ENCODE measurements at regions of chr5 and their contacts with region 1.

Region 1: GRCh38 chr5:157172403-157172802 is 6.3 kb upstream of the GARIN3 start:
- DNase-seq: peak; percentile 98
- ATAC-seq: peak; percentile 98
- H3K4me3 ChIP-seq: no peak overlapping the region
- H3K27ac ChIP-seq: peak overlapping the region; percentile 93
- H3K4me1 ChIP-seq: peaks cover 14% of the 10 kb centered on the region
- H3K27me3 ChIP-seq: no peaks in the 10 kb centered on the region
- CTCF ChIP-seq: no peak
- EP300 ChIP-seq: peak; percentile 88 to 94; a peak in 3 of 4 replicates
- POLR2A ChIP-seq: no peak
- RAD21 ChIP-seq: 0 out of 2 replicates have a peak, but pooled peaks have one; percentile 30

Region 2: DNA sequence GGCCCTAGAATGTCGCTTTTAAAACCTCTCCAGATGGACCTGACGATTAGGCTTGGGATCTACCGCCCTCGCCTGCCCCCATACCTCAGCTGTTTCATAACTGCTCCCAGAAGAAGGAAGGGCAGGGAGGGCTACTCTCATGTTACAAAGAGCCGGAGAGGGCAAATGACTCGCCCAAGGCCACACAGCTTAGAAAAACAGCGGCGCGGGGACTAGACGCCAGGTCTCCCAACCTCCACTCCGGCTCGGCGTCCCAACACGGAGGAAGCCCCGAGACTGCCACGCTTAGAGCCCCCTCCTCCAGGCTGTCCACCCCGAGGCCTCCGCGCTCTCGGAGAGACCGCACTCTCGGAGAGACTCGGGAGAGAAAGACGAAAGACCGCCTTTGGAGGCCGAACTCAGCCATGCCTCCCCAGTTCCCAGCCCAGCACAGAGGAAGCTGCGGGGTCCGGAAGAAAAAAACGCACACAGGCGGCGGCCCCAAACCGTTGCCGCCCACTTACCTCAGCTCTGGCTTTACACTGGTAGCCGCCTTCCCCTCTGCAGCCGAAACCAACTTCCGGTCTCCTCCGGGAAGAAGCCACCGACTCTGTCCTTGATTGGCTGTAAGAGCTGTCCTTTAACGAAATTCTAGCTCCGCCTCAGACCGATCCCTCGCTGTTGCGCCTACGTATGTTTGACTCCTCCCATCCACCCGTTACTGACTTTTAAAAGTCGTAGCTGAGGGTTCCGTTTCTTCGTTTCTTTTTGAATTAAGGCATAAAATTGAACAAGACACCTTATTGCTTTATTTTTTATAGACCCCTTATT is 29.9 kb before region 1 on chr5 and contains the start of gene MED7:
- CTCF ChIA-PET with region 1: interaction called, 27 read pairs
- POLR2A ChIA-PET with region 1: interaction called, 13 read pairs
- RAD21 ChIA-PET with region 1: interaction called, 30 read pairs
- SMC1A ChIA-PET with region 1: interaction called, 26 read pairs
- in situ Hi-C with region 1: no loop called
- intact Hi-C with region 1: no loop called
- DNase-seq: peak; percentile 99
- ATAC-seq: peak; percentile 100
- H3K4me3 ChIP-seq: peak within 1 kb of the TSS; percentile 88
- H3K27ac ChIP-seq: peak within 1 kb of the TSS; percentile 99
- H3K4me1 ChIP-seq: peaks cover 7% of the 10 kb centered on the region
- H3K27me3 ChIP-seq: no peaks in the 10 kb centered on the region
- CTCF ChIP-seq: no peak
- EP300 ChIP-seq: no peak
- POLR2A ChIP-seq: peak; percentile 96
- RAD21 ChIP-seq: no peak
- polyA plus RNA-seq, gene MED7: 42.6 to 47.7 TPM

Region 3: DNA sequence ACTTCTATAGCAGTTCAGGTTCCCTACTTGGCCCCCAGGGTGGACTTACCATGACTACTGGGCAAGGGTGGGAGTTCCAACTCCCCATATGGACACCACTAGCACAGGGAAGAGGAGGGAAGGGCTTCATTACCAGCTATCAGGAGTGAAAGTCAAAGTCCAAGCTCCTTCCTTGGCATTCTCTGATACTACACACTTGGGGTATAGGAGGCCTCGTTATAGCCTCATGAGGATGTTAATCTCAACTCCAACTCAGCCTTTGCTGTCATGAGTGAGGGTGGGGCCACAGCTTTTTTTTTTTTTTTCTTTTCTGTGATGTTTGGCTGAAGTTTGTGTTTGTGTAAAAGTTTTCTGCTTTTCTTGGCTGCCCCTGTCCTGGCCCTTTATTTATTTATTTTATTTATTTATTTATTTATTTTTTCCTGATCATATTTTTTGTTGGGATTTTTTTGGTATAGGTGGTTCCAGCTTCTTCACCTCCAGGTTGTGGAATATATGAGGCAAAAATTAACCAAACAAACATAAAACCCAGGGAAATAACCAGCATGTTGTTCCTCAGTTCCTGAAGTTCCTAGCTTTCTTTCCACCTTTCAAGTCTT is 15.0 kb before region 1 on chr5:
- CTCF ChIA-PET with region 1: interaction called, 5 read pairs
- POLR2A ChIA-PET with region 1: interaction called, 17 read pairs
- RAD21 ChIA-PET with region 1: interaction called, 28 read pairs
- SMC1A ChIA-PET with region 1: interaction called, 35 read pairs
- in situ Hi-C with region 1: no loop called
- intact Hi-C with region 1: no loop called
- DNase-seq: no peak
- ATAC-seq: no peak
- H3K4me3 ChIP-seq: no peak overlapping the region
- H3K27ac ChIP-seq: no peak overlapping the region
- H3K4me1 ChIP-seq: no peaks in the 10 kb centered on the region
- H3K27me3 ChIP-seq: no peaks in the 10 kb centered on the region
- CTCF ChIP-seq: no peak
- EP300 ChIP-seq: no peak
- POLR2A ChIP-seq: no peak
- RAD21 ChIP-seq: no peak

Region 4: GRCh38 chr5:157189223-157189622 is 16.8 kb after region 1 on chr5:
- CTCF ChIA-PET with region 1: interaction called, 5 read pairs
- POLR2A ChIA-PET with region 1: interaction called, 3 read pairs
- RAD21 ChIA-PET with region 1: interaction called, 7 read pairs
- SMC1A ChIA-PET with region 1: interaction called, 43 read pairs
- in situ Hi-C with region 1: no loop called
- intact Hi-C with region 1: no loop called
- DNase-seq: no peak
- ATAC-seq: peak; percentile 98
- H3K4me3 ChIP-seq: no peak overlapping the region
- H3K27ac ChIP-seq: no peak overlapping the region
- H3K4me1 ChIP-seq: 0 out of 2 replicates have a peak, but pooled peaks cover 6% of the 10 kb centered on the region
- H3K27me3 ChIP-seq: no peaks in the 10 kb centered on the region
- CTCF ChIP-seq: no peak
- EP300 ChIP-seq: no peak
- POLR2A ChIP-seq: no peak
- RAD21 ChIP-seq: no peak

Region 5: DNA sequence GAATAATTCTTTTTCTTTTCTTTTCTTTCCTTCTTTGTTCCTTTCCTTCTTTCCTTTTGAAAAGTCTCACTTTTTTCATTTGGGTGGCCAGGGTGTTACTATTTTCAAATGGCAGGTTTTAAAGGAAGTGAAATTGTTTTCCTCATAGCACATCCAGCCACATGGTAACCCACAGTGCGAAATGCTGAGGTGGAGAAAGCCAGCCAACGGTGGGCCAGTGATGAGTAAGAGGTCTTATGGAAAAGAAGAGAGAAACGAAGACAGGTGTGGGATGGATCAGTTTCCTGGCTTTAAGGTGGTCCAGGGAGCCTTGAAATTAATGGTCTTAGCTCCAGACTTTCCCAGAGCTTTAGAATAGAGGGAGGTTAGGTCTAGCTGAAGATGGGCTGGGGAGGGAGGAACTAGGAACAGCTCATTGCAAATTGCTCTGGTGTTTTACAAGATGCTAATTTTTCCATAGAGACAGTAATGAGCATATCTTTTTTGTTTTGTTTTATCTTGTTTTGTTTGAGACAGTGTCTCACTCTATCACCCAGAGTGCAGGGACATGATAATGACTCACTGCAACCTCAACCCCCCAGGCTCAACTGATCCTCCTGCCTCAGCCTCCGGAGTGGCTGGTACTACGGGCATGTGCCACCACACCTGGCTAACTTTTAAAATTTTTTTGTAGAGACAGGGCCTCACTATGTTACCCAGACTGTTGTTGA is 26.0 kb after region 1 on chr5:
- CTCF ChIA-PET with region 1: interaction called, 5 read pairs
- POLR2A ChIA-PET with region 1: interaction called, 8 read pairs
- RAD21 ChIA-PET with region 1: interaction called, 9 read pairs
- SMC1A ChIA-PET with region 1: interaction called, 21 read pairs
- in situ Hi-C with region 1: no loop called
- intact Hi-C with region 1: no loop called
- DNase-seq: no peak
- ATAC-seq: peak; percentile 67
- H3K4me3 ChIP-seq: no peak overlapping the region
- H3K27ac ChIP-seq: no peak overlapping the region
- H3K4me1 ChIP-seq: no peaks in the 10 kb centered on the region
- H3K27me3 ChIP-seq: no peaks in the 10 kb centered on the region
- CTCF ChIP-seq: no peak
- EP300 ChIP-seq: no peak
- POLR2A ChIP-seq: no peak
- RAD21 ChIP-seq: no peak

Region 6: GRCh38 chr5:157265714-157266285 is 93.4 kb after region 1 on chr5 and contains the start of gene CYFIP2:
- CTCF ChIA-PET with region 1: interaction called, 3 read pairs
- POLR2A ChIA-PET with region 1: interaction called, 7 read pairs
- RAD21 ChIA-PET with region 1: interaction called, 9 read pairs
- SMC1A ChIA-PET with region 1: interaction called, 11 read pairs
- in situ Hi-C with region 1: no loop called
- intact Hi-C with region 1: no loop called
- DNase-seq: no peak
- ATAC-seq: peak; percentile 87
- H3K4me3 ChIP-seq: peak within 1 kb of the TSS; percentile 91
- H3K27ac ChIP-seq: peak within 1 kb of the TSS; percentile 83
- H3K4me1 ChIP-seq: peaks cover 37% of the 10 kb centered on the region
- H3K27me3 ChIP-seq: no peaks in the 10 kb centered on the region
- CTCF ChIP-seq: no peak
- EP300 ChIP-seq: no peak
- POLR2A ChIP-seq: peak; percentile 80
- RAD21 ChIP-seq: no peak
- polyA plus RNA-seq, gene CYFIP2: 43.4 to 68.6 TPM

Region 7: DNA sequence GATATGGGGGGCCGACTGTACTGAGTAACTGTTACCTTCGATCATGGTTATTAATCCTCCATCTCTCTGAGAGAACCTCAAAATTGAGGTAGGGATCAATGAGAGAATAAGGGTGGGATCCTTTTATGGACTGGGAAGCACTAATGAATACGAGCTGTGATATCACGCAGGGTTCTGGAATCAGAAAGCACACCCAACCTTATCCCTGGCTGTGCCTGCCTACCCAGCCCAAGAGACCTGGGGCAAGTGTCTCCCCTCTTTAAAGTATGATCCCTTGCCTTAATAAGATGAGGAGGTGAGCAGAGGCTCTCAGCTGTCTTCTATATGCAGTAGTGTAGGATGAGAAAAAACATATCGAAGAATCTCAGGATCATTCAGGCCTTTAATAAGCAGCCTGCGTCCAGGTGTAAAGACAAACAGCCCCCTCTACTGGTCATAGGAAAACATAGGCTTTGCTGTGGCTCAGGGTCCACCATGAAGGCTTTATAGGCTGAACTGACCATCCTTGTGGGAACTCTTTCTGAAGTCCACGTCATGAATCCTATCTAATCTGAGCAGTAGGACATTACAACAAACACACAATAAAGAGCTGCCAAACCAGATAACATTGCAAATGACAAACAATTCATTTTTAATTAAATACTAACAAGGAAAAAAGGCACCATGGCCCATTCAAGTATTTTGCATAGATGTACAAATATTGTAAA is 304.5 kb after region 1 on chr5:
- CTCF ChIA-PET with region 1: no interaction called
- POLR2A ChIA-PET with region 1: no interaction called
- RAD21 ChIA-PET with region 1: no interaction called
- SMC1A ChIA-PET with region 1: no interaction called
- in situ Hi-C with region 1: no loop called
- intact Hi-C with region 1: no loop called
- DNase-seq: no peak
- ATAC-seq: peak; percentile 85
- H3K4me3 ChIP-seq: no peak overlapping the region
- H3K27ac ChIP-seq: no peak overlapping the region
- H3K4me1 ChIP-seq: no peaks in the 10 kb centered on the region
- H3K27me3 ChIP-seq: no peaks in the 10 kb centered on the region
- CTCF ChIP-seq: peak; percentile 74 to 77 (median 77)
- EP300 ChIP-seq: no peak
- POLR2A ChIP-seq: no peak
- RAD21 ChIP-seq: peak; percentile 89

Measured in GM12878 (cell line).